Activated B cell treated with CpG ODN at 0.5 μM for 24 hours (primary cell): ENCODE measurements at regions of chr2 and their contacts with region 1.

Region 1: DNA sequence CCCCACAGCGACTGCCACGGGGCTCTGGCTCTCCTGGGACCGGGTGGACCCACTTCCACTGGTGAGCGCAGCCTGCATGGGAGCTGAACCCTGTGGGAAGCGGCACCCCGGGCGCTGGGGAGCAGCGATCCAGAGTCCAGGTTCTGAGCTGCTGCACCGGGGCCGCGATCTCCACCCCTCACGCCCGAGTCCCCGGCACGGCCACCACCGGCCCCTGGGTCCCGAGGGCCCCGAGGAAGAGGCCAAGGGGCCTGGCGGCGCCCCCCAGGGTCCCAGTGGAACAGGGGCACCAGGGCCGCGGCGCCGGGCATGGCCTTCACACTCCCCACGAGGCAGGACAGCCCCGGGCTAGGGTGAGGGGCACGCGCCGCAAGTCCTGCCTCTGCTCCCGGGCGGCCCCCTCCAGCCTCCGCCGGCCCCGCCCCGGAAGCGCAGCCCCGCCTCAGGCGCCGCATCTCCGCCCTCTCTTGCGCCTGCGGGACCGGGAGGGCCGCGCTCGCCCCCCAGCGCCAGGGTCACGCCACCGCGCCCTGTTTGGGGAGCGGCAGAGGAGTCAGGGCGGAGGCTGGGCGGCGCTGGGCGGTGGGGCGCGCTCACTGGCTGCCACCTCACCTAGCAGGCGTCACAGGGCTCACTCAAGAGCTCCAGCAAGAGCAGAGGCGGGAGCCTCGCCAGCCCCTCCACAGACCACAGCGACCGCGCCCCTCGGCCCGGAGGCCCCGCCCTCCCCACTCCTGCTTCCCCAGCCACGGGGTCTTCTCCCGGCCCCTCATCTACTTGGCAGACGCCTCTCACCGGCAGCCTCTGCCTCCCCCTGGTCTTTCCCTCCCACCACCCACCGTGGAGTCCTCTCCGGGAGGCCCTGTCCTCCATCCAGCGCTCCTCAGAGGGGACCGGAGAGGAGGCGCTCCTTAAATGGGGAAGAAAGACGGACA is 26.8 kb downstream of the THAP4 start:
- DNase-seq: peak; percentile 92
- ATAC-seq: peak; percentile 99
- H3K4me3 Mint-ChIP-seq: peak overlapping the region; percentile 66
- H3K27ac Mint-ChIP-seq: peak overlapping the region; percentile 53
- H3K4me1 Mint-ChIP-seq: peaks cover 15% of the 10 kb centered on the region
- H3K27me3 Mint-ChIP-seq: no peaks in the 10 kb centered on the region
- CTCF ChIP-seq: no peak

Region 2: DNA sequence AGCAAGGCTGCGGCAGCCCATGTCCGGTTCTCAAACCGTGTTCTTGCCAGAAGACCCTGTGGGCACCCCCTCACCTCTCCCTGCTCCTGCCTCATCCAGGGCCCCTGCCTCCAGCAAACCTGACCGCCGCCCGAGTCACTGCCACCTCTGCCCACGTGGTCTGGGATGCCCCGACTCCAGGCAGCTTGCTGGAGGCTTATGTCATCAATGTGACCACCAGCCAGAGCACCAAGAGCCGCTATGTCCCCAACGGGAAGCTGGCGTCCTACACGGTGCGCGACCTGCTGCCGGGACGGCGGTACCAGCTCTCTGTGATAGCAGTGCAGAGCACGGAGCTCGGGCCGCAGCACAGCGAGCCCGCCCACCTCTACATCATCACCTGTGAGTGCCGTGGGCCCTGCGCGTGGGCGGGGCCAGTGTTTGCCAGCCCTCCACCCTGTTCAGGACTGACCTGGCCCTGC is 540.3 kb before region 1 on chr2:
- CTCF ChIA-PET with region 1: no interaction called
- POLR2A ChIA-PET with region 1: no interaction called
- intact Hi-C with region 1: loop called (anchors 10 kb)
- DNase-seq: no peak
- ATAC-seq: no peak
- H3K4me3 Mint-ChIP-seq: no peak overlapping the region
- H3K27ac Mint-ChIP-seq: no peak overlapping the region
- H3K4me1 Mint-ChIP-seq: no peaks in the 10 kb centered on the region
- H3K27me3 Mint-ChIP-seq: no peaks in the 10 kb centered on the region
- CTCF ChIP-seq: no peak

Region 3: DNA sequence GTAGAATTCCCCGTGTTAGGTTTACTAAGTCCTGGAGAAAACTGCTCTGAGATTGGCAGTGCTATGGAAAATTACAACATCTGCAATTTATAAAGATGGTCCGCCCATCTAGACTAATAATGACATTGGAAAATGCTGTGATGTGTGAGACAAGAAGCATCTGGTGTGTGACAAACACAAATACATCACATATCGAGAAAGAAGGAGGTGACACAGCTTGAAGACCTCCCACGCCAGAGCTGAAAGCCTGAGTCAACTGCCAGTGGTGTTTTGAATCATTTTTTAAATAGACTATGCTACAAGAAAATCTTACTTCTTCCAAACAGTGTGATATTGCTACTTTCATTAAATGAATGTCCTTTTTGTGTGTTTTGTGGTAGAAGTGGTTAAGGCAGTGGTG is 430.2 kb before region 1 on chr2:
- CTCF ChIA-PET with region 1: no interaction called
- POLR2A ChIA-PET with region 1: no interaction called
- intact Hi-C with region 1: no loop called
- DNase-seq: no peak
- ATAC-seq: no peak
- H3K4me3 Mint-ChIP-seq: no peak overlapping the region
- H3K27ac Mint-ChIP-seq: no peak overlapping the region
- H3K4me1 Mint-ChIP-seq: no peaks in the 10 kb centered on the region
- H3K27me3 Mint-ChIP-seq: no peaks in the 10 kb centered on the region
- CTCF ChIP-seq: no peak